ENCODE measurements at regions of chr10 and their contacts with region 1.

Region 1: GRCh38 chr10:5873515-5873995 is 16.1 kb downstream of the ANKRD16 start:
- DNase-seq: peak; percentile 57
- H3K4me3 ChIP-seq: no peak overlapping the region
- H3K27ac ChIP-seq: no peak overlapping the region
- H3K4me1 ChIP-seq: no peaks in the 10 kb centered on the region
- H3K27me3 ChIP-seq: no peaks in the 10 kb centered on the region
- CTCF ChIP-seq: peak; percentile 62 to 65

Region 2: DNA sequence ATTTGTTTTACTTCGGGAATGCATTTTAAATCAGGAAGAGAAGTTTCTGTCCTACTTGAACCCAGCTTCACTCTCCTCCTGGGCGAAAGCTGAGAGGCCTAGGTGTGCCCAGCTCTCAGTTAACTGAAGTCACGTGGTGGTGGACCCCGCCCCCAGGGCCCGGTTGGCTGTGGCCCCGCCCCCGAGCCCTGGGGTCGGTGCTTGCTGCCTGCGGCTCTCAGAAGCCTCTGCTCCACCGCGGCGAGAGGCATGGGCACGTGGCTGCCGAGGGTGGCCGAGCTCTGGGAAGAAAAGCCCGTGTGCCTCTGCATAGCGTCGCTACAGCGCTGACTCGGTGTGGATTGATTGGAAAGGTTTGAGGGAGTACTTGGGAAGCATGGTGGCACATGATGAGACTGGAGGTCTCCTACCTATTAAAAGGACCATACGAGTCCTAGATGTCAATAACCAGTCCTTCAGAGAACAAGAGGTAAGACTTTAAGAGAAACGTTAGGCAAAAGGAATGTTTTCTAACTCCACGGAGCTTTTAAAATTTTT is 427.1 kb before region 1 on chr10:
- CTCF ChIA-PET with region 1: no interaction called
- dilution Hi-C with region 1: no loop called
- in situ Hi-C with region 1: no loop called
- intact Hi-C with region 1: loop called (anchors 10 kb)
- DNase-seq: peak; percentile 95
- H3K4me3 ChIP-seq: no peak overlapping the region
- H3K27ac ChIP-seq: no peak overlapping the region
- H3K4me1 ChIP-seq: peaks cover 27% of the 10 kb centered on the region
- H3K27me3 ChIP-seq: no peaks in the 10 kb centered on the region
- CTCF ChIP-seq: no peak

Measured in mammary epithelial cell (primary cell).